ENCODE measurements at regions of chr4 and their contacts with region 1.

Region 1: DNA sequence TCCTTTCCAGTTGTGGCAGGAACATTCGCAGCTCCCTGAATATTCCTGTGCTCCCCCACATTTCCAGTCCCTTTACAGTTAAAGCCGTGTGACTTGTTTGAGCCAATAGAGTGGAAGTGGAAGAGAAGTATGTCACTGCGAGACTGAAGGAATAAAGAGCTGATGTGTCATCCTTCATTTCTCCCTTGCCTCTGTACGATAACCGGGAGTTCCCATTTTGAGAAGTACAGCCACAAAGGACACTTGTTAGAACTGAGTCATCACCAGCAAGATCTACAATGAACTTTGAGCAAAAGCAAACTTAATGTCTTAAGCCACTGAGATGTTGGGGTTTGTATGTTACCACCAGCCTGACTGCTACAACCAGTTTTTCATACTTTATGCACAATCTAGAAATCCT is 92.3 kb downstream of the SPRY1 start:
- DNase-seq: no peak
- H3K4me3 Mint-ChIP-seq: no peak overlapping the region
- H3K27ac Mint-ChIP-seq: no peak overlapping the region
- H3K4me1 Mint-ChIP-seq: peaks cover 8% of the 10 kb centered on the region
- H3K27me3 Mint-ChIP-seq: peaks cover 3% of the 10 kb centered on the region

Region 2: DNA sequence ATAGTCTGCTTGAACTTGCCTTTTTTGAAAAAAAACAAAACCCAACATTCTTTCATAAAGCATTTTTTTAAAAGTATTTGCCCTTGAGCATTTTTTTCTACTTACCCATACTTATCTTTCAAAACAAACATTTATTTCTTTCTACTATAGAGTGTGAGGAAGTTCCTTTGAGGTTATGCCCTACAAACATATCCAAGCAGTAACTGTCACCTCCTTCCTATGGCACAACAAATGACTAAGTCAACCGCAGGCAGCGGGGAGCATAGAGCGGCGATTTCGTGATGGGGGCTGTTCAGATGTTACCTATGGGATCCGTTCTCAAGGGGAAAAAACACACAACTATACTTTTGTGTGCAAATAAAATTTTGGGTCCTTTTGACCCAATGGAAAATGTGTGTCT is 72.9 kb before region 1 on chr4:
- CTCF ChIA-PET with region 1: no interaction called
- intact Hi-C with region 1: loop called (anchors 2 kb)
- DNase-seq: peak; percentile 66
- H3K4me3 Mint-ChIP-seq: no peak overlapping the region
- H3K27ac Mint-ChIP-seq: no peak overlapping the region
- H3K4me1 Mint-ChIP-seq: peaks cover 54% of the 10 kb centered on the region
- H3K27me3 Mint-ChIP-seq: no peaks in the 10 kb centered on the region

Region 3: DNA sequence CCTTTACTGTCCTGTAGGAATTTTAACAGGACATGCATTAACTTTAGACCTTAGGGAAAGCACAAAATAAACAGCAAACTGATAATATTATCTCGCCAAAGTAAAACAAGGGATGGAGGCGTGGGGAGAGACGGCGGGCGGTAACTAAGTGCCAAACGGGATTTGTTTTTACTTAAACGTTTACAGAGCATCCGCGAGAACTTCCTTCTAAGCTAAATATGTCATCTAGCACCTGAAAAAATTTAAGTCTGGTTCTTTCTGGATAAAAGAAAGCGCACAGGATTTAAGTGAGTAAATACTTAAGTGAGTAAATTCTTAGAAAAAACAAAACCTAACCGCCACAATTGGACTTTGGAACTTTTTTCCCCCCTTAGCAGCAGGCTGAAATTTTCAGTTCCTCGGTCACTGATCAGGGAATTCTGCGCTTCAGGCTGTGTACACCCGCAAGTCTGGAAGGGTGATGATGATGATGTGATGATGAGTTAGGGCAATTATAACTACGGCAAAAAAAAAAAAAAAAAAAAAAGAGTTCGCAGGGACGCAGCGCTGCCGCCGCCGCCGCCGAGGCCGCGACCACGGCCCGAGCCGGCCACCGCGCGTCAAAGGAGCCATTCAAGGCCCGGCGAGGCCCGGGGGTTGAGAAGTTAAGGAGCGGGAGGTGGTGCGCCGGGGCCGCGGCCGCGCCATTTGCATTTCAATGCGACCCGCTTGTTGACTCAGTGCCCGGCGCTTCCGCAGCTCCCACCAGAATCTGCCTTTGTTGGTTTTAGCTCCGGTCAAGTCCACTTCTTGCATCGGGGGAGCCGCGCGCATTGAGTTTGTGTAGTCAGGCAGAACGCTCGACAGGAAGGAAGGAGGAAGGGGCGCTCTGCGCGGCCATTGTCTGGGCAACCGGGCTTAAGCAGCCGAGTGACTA is 16.4 kb after region 1 on chr4:
- CTCF ChIA-PET with region 1: no interaction called
- intact Hi-C with region 1: loop called (anchors 2 kb)
- DNase-seq: peak; percentile 21
- H3K4me3 Mint-ChIP-seq: peak overlapping the region; percentile 82
- H3K27ac Mint-ChIP-seq: no peak overlapping the region
- H3K4me1 Mint-ChIP-seq: peaks cover 7% of the 10 kb centered on the region
- H3K27me3 Mint-ChIP-seq: peaks cover 38% of the 10 kb centered on the region

Region 4: GRCh38 chr4:123553733-123554637 is 65.1 kb after region 1 on chr4:
- CTCF ChIA-PET with region 1: no interaction called
- intact Hi-C with region 1: no loop called
- DNase-seq: no peak
- H3K4me3 Mint-ChIP-seq: no peak overlapping the region
- H3K27ac Mint-ChIP-seq: no peak overlapping the region
- H3K4me1 Mint-ChIP-seq: no peaks in the 10 kb centered on the region
- H3K27me3 Mint-ChIP-seq: no peaks in the 10 kb centered on the region

Region 5: GRCh38 chr4:123880631-123881030 is 391.7 kb after region 1 on chr4:
- CTCF ChIA-PET with region 1: no interaction called
- intact Hi-C with region 1: no loop called
- DNase-seq: no peak
- H3K4me3 Mint-ChIP-seq: no peak overlapping the region
- H3K27ac Mint-ChIP-seq: no peak overlapping the region
- H3K4me1 Mint-ChIP-seq: no peaks in the 10 kb centered on the region
- H3K27me3 Mint-ChIP-seq: no peaks in the 10 kb centered on the region

Region 6: DNA sequence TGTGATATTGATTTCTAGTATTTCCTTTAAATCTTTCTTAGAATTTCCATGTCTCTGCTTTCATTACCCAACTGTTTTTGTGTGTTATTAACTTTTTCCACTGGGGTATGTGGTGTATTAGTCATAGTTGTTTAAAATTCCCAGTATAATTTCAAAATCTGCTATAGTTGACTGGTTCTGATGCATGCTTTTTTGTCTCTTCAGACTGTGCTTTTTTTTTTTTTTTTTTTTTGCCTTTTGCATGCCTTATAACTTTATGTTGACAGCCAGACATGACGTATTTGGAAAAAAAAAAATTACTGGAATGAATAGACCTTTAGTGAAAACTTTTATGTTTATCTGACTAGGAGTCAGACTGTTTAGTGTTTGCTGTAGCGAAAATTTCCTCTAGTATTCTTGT is 643.2 kb after region 1 on chr4:
- CTCF ChIA-PET with region 1: no interaction called
- intact Hi-C with region 1: no loop called
- DNase-seq: no peak
- H3K4me3 Mint-ChIP-seq: no peak overlapping the region
- H3K27ac Mint-ChIP-seq: no peak overlapping the region
- H3K4me1 Mint-ChIP-seq: no peaks in the 10 kb centered on the region
- H3K27me3 Mint-ChIP-seq: no peaks in the 10 kb centered on the region